ENCODE measurements at regions of chr7 and their contacts with region 1.

Region 1: DNA sequence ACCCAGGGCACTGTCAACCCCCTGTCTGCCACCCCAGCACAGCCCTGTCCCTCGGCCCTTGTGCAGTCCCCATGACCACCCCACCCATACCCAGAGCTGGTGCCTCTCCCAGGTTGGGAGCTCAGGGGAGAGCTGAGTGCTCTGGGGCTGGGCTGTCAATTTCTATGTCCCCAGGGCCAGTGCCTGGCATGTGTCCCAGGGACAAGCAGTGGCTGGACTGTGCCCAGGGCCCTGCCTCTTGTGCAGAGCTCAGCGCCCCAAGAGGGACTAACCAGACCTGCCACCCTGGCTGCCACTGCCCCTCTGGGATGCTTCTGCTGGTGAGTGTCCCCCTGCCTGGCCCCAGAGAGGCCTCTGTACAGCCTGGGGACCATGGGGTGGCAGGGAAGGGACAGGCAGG is 29.0 kb upstream of the ZNF862 start:
- DNase-seq: no peak
- H3K4me3 ChIP-seq: no peak overlapping the region
- H3K27me3 ChIP-seq: no peaks in the 10 kb centered on the region; the same call in 1 of the 2 replicates
- CTCF ChIP-seq: no peak

Region 2: DNA sequence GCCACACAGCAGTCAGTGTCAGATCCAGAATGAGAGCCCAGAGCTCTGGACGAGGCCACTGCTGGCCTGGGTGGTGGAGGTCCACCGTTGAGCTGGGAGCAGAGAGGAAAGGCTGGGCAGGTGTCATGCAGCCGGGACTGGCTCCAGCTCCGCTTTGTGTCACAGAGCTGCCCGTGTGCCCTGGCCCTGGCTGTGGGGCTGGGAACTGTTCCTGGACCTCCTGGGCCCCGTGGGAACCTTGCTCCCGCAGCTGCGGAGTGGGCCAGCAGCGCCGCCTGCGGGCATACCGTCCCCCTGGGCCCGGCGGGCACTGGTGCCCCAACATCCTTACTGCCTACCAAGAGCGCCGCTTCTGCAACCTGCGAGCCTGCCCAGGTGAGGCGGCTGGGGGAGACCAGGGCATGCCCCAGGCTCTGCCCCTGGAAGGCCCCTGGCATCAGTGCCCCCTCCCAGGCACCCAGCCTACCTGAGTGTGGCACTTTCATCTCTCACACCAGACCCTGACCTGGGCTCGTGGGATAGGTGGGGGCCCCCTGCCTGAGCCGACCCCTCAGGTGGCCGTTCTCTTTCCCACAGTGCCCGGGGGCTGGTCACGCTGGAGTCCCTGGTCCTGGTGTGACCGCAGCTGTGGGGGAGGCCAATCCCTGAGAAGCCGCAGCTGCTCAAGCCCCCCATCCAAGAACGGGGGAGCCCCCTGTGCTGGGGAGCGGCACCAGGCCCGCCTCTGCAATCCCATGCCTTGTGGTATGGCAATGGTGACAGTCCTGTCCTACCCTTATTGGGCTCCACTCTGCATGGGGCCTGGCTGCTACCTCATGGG is 10.1 kb after region 1 on chr7:
- CTCF ChIA-PET with region 1: interaction called, 15 read pairs
- POLR2A ChIA-PET with region 1: no interaction called
- DNase-seq: no peak
- H3K4me3 ChIP-seq: no peak overlapping the region
- H3K27me3 ChIP-seq: no peaks in the 10 kb centered on the region
- CTCF ChIP-seq: no peak